ENCODE measurements at regions of chr17 and their contacts with region 1.

Region 1: DNA sequence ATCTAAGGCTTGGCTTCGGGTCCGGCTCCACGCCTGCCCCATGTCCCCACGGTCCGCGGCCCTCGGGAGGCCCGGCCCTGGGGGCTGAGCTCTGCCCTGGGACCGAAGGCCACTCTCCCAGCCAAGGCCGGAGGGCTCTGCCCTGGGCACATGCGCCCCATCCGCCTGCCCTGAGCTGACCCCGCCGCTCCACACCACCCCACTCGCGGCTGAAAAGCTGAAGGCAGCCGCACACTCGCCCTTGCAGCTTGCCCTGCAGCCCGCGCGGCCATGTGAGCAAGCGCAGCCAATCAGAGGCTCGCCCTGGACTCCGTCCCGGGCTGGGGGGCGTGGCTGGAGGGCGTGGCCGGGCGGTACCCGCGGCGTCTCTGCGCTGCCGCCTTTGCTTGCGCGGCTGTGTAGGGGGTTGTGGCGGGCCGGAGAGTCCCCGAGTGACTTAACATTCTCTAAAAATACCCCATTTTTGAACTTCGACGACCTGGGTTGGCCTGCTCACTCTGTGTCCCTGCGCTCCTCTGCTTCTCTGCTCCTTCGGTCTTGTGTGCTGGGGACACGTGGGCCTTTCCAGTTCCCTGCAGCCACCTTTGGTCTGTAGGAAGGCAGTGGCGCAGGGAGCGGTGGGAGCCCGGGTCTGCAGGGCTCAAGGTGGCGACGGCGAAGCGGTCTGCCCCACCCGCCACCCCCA is 8.8 kb upstream of the MAP2K3 start:
- DNase-seq: peak; percentile 94 to 97
- ATAC-seq: peak; percentile 96 to 98 (median 98)
- H3K4me3 ChIP-seq: peak overlapping the region; percentile 49 to 78 (median 65)
- H3K27ac ChIP-seq: peak overlapping the region; percentile 19 to 82 (median 76)
- H3K4me1 ChIP-seq: peaks cover 4 to 41% (median 16%) of the 10 kb centered on the region in 9 donors
- H3K27me3 ChIP-seq: no peaks in the 10 kb centered on the region
- CTCF ChIP-seq: peak in 5 of 9 donors; percentile 12 to 24 (median 18)

Region 2: GRCh38 chr17:21126645-21127510 is 148.8 kb before region 1 on chr17 and contains the start of gene DHRS7B:
- intact Hi-C with region 1: loop called (anchors 2 to 10 kb)
- DNase-seq: peak; percentile 96 to 97
- ATAC-seq: peak; percentile 96 to 98 (median 98)
- H3K4me3 ChIP-seq: peak within 1 kb of the TSS; percentile 61 to 96 (median 91)
- H3K27ac ChIP-seq: peak within 1 kb of the TSS; percentile 82 to 96 (median 94)
- H3K4me1 ChIP-seq: peaks cover 4 to 63% (median 39%) of the 10 kb centered on the region in 9 donors
- H3K27me3 ChIP-seq: no peaks in the 10 kb centered on the region
- CTCF ChIP-seq: peak in 1 of 9 donors; percentile 13
- total RNA-seq, gene DHRS7B: 17.1 to 48.0 (median 26.0) TPM

Region 3: DNA sequence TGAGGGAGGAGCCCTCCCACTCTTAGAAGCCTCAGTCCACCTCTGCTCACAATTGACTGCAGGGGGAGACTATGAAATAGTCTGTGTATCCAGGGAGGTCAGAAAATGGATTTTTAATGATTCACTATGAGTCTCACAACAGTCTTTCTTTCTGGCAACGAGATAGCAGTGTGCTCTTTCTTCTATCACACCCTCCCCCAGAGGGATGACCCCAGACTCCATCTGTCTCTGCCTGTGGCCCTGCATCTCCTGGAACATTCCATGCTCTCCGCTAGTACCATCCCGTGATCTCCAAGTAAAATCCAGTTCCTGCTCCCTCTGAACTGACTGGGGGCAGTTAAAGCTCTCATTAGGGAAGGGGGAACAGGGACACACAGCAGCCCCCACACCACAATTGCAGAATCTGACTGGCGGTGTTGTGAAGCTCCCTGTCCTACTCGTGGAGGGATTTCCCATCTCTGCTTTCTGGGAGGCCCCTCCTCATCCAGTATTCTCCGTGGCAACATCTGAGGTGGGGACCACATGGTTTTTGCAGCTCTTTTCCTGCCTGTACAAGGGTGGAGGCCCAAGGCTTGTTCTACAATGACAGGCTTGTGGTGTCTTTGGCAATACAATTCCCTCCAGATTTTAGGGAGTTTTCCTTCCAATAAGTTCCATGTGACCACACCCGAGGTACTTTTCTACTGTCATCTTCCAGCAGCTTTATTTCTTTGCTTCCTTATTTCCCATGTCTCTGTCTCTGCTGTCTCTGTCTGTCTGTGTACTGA is 42.0 kb before region 1 on chr17:
- intact Hi-C with region 1: no loop called
- DNase-seq: no peak
- ATAC-seq: peak in 5 of 8 donors; percentile 44 to 63 (median 58)
- H3K4me3 ChIP-seq: no peak overlapping the region
- H3K27ac ChIP-seq: peak overlapping the region in 1 of 10 donors; percentile 24
- H3K4me1 ChIP-seq: peaks cover 0 to 17% (median 0%) of the 10 kb centered on the region in 9 donors
- H3K27me3 ChIP-seq: no peaks in the 10 kb centered on the region
- CTCF ChIP-seq: no peak

Region 4: DNA sequence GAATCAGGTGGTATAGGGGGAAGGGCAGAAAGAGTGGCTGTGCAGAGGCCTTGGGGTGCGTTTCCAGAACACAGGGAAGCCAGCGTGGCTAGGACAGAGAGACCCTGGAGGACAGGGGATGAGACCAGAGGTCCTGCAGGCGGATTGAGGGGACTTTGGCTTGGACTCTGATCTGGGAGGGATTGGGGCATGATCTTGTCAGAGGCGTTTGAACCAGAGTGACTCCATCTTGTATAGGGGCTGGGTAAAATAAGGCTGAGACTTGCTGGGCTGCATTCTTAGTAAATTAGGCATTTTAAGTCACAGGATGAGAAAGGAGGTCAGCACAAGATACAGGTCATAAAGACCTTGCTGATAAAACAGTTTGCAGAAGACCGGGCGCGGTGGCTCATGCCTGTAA is 17.1 kb before region 1 on chr17:
- intact Hi-C with region 1: loop called in 1 of 10 experiments (anchors 1 kb)
- DNase-seq: no peak
- ATAC-seq: no peak
- H3K4me3 ChIP-seq: no peak overlapping the region
- H3K27ac ChIP-seq: no peak overlapping the region
- H3K4me1 ChIP-seq: peaks cover 0 to 21% (median 6%) of the 10 kb centered on the region in 9 donors
- H3K27me3 ChIP-seq: no peaks in the 10 kb centered on the region
- CTCF ChIP-seq: no peak

Region 5: DNA sequence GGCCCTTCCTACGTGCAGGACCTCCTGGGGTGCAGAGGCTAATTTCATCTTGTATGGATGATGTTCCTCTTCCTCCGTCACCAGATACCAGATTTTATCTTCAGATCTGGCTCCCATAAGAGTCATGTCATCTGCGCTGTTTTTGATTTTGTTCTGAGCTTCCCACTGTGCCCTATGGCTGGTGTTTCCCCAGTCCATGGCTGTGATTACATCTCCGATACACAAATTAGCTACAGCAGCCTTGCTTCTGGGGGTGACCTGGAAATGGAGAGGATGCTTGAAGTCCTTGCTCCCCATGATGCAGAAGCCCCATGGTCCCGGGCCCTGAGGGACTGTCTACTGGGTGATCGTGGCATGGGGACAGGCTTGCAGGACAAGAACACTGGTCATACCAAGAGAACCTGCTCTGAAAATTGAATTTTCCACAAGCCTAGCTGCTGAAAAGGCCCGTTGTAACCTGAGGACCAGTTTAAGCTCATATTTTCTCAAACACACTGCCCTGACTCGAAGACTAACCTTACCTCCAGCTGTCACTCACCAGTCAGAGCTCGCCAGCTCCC is 169.4 kb after region 1 on chr17:
- intact Hi-C with region 1: loop called in 8 of 10 experiments (anchors 5 to 10 kb)
- DNase-seq: no peak
- ATAC-seq: peak in 1 of 8 donors; percentile 13
- H3K4me3 ChIP-seq: no peak overlapping the region
- H3K27ac ChIP-seq: no peak overlapping the region
- H3K4me1 ChIP-seq: no peaks in the 10 kb centered on the region
- H3K27me3 ChIP-seq: peaks cover 0 to under 1% (median 0%) of the 10 kb centered on the region in 7 donors
- CTCF ChIP-seq: no peak

Region 6: GRCh38 chr17:21511363-21512198 is 235.9 kb after region 1 on chr17:
- intact Hi-C with region 1: loop called in 9 of 10 experiments (anchors 1 to 10 kb)
- DNase-seq: peak; percentile 82 to 86
- ATAC-seq: peak; percentile 93 to 98 (median 96)
- H3K4me3 ChIP-seq: peak overlapping the region; percentile 38 to 69 (median 62)
- H3K27ac ChIP-seq: peak overlapping the region in 9 of 10 donors; percentile 21 to 81 (median 60)
- H3K4me1 ChIP-seq: peaks cover 0 to 20% (median 4%) of the 10 kb centered on the region in 9 donors
- H3K27me3 ChIP-seq: peaks cover 0 to 21% (median 0%) of the 10 kb centered on the region in 7 donors
- CTCF ChIP-seq: peak; percentile 71 to 94 (median 85)

Measured in heart right ventricle (tissue), 16 donors.